Gastrocnemius medialis (tissue), 4 donors: ENCODE measurements at regions of chr11 and their contacts with region 1.

Region 1: GRCh38 chr11:121520243-121521144 is 67.7 kb upstream of the SORL1-AS1 start:
- DNase-seq: no peak
- ATAC-seq: peak; percentile 56 to 72
- H3K4me3 ChIP-seq: no peak overlapping the region
- H3K27ac ChIP-seq: no peak overlapping the region
- H3K4me1 ChIP-seq: peaks cover 0 to 13% of the 10 kb centered on the region in 2 donors
- H3K27me3 ChIP-seq: no peaks in the 10 kb centered on the region
- CTCF ChIP-seq: no peak
- POLR2A ChIP-seq: no peak

Region 2: DNA sequence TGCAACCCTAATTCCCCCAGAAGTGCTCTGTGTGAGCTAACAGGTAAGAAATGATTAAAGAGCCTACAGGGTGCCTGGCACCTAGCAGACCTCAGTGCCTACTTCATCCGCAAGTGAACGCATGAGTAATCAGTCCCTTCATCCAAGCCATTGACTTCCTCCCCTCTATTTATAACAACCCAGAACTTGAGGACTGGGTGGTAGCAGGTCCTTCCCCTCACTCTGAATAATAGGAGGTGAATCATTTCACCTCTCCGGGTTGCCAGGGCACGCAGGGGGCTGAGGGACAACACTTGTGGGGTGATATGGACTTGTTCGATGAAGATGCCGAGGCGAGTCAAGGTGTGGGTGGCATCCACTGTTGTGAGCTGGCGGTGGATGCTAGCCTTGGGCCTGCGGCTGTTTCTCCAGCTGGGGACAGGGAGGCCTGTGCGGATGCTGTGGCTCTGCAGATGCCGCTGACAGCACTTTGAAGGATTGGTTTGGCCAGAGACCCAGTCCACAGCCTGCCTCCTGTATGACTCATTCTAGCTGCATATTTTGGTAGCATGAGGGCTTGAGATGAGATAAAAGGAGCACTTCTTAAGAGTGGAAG is 56.0 kb before region 1 on chr11:
- in situ Hi-C with region 1: no loop called
- intact Hi-C with region 1: loop called (anchors 5 kb)
- DNase-seq: no peak
- ATAC-seq: peak in 1 of 2 donors; percentile 53
- H3K4me3 ChIP-seq: no peak overlapping the region
- H3K27ac ChIP-seq: no peak overlapping the region
- H3K4me1 ChIP-seq: no peaks in the 10 kb centered on the region
- H3K27me3 ChIP-seq: no peaks in the 10 kb centered on the region
- CTCF ChIP-seq: no peak
- POLR2A ChIP-seq: no peak

Region 3: GRCh38 chr11:121634889-121635288 is 114.4 kb after region 1 on chr11:
- in situ Hi-C with region 1: no loop called
- intact Hi-C with region 1: no loop called
- DNase-seq: no peak
- ATAC-seq: no peak
- H3K4me3 ChIP-seq: no peak overlapping the region
- H3K27ac ChIP-seq: no peak overlapping the region
- H3K4me1 ChIP-seq: no peaks in the 10 kb centered on the region
- H3K27me3 ChIP-seq: no peaks in the 10 kb centered on the region
- CTCF ChIP-seq: no peak
- POLR2A ChIP-seq: no peak